RWPE1 (cell line): ENCODE measurements at regions of chr14 and their contacts with region 1.

Region 1: GRCh38 chr14:75982266-75983018 is 647 bp upstream of the TGFB3 start:
- DNase-seq: peak; percentile 75
- H3K27ac ChIP-seq: peak overlapping the region; percentile 85
- CTCF ChIP-seq: peak; percentile 74

Region 2: GRCh38 chr14:75542588-75543091 is 439.8 kb before region 1 on chr14:
- CTCF ChIA-PET with region 1: no interaction called
- POLR2A ChIA-PET with region 1: no interaction called
- DNase-seq: no peak
- H3K27ac ChIP-seq: no peak overlapping the region
- CTCF ChIP-seq: no peak

Region 3: DNA sequence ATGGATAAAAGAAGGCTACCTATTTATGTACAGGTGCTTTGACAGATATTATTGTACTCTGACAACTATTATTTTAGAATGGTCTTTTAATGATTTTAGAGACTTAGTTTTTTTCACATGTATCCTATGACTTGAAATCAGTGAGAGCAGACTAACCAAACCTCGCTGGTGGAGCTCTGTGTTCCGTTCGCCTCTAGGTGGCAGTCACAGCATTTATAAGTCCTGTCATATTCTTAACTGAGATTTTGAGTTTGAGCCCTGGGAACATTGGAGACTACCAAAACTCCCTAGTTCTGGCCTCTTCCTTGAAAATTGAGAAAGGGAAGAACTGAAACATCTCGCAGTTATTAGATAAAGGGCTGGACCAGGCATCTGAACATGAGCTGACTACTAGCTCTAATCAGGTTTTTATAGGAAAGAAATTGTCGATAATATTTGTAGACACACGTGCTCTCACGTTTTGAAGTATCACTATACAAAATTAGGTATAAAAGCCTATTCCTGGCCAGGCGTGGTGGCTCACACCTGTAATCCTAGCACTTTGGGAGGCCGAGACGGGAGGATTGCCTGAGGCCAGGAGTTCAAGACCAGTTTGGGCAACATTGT is 273.1 kb before region 1 on chr14:
- CTCF ChIA-PET with region 1: interaction called, 65 read pairs
- POLR2A ChIA-PET with region 1: no interaction called
- DNase-seq: peak; percentile 64
- H3K27ac ChIP-seq: no peak overlapping the region
- CTCF ChIP-seq: peak; percentile 87

Region 4: DNA sequence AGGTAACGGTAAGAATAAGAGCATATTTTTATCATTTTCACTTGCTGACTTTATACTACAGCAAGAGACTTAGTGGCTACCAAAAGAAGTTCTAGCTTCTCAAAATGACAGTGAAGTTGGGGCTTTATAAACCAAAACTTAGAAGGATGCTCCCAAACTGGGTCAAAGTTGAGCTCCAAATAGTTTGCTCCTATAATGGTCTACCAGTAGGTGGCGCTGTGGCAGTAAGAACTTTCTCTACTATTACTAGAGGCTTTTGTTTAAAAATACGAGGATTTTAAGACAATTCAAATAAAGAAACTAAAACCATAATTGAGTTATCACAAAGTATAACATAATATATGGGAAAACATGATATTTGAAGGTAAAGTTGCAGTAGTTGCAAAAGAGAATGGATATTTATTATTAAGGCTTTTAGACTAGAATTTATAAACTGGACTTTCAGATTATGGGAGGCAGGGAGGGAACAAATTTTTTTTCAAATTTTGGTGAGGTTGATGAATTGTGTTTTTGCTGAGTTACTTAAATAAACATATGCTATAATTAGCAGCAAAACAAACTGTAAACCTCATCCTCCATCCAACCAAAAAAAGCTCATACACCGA is 75.7 kb before region 1 on chr14:
- CTCF ChIA-PET with region 1: interaction called, 17 read pairs
- POLR2A ChIA-PET with region 1: no interaction called
- DNase-seq: peak; percentile 49
- H3K27ac ChIP-seq: no peak overlapping the region
- CTCF ChIP-seq: peak; percentile 88

Region 5: DNA sequence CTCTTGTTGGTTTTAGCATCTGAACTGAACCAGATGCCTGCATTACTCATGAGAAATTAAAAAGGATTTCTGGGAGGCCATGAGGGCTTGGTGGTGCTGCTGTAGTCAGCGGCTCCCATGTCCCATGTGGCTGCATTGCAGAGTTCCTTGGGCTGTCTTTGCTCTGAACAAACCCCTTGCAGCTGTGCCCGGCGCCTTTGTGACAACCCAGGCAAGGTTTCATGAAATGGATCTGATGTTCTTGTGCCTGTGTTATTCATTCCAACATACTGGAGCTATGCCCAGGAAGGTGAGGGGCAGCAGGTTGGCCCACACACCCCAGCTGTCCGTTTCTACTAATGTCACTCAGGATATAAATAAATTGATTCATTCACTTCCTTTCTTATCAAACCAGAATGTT is 41.4 kb before region 1 on chr14:
- CTCF ChIA-PET with region 1: interaction called, 11 read pairs
- POLR2A ChIA-PET with region 1: no interaction called
- DNase-seq: no peak
- H3K27ac ChIP-seq: no peak overlapping the region
- CTCF ChIP-seq: no peak